CD4-positive, alpha-beta memory T cell (primary cell): ENCODE measurements at regions of chr7 and their contacts with region 1.

Region 1: DNA sequence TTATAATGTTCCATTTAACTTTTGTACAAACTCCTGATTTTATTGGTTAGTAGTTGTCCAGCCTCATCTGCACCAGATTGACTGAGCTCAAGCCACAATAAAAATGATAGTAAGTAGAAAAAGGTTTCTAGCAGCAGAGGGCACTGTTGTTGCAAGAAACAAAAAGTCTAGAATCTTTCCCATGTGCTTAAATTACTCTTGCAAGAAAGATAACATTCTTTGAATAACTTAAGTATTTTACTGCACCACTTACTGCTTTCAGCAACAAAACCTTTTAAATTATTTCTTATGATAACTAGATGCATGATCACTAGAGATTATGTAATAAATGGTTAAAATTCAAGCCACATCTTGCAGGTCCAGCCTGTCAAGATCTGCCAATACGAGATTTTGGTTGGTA is 27.0 kb downstream of the LMOD2 start:
- DNase-seq: peak; percentile 27 to 34 (median 29)
- H3K4me3 ChIP-seq: no peak overlapping the region
- H3K4me3 Mint-ChIP-seq: no peak overlapping the region
- H3K27ac ChIP-seq: no peak overlapping the region
- H3K27ac Mint-ChIP-seq: no peak overlapping the region
- H3K4me1 ChIP-seq: no peaks in the 10 kb centered on the region
- H3K4me1 Mint-ChIP-seq: peaks cover 0 to 4% (median 0%) of the 10 kb centered on the region in 4 donors
- H3K27me3 ChIP-seq: no peaks in the 10 kb centered on the region
- H3K27me3 Mint-ChIP-seq: no peaks in the 10 kb centered on the region

Region 2: DNA sequence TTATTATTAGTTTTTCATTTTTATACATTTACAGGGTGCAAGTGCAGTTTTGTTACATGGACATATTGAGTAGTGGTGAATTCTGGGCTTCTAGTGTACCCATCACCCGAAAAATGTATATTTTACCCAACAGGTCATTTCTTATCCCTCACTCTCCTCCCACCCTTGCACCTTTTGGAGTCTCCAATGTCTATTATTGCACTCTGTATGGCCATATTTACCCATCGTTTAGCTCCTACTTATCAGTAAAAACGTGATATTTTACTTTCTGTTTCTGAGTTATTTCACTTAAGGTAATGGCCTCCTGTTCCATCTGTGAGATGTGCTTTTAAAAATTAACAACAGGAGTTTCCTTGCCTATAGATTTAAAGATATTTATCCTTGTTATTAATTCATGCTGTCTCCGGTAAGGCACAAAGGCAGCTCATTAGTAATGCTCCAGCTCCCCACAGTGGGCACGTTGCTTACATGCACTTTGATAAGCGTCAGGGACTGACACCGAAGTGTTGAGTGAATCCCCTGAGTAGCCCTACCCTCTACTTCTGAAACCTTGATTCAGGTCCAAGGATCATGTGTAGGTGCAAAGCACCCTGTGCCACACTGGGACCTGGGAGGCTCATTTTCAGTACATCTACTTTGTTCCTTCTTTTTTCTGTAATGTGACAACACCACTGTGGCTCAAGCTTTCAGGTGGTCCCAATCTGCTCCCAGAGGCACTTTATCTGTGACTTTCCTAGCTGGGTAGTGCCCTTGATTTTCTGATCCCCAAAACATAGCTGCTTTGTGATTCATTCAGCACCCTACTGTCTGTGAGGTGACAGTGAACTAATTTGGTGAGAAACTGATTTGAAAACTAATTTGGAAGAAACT is 189.5 kb after region 1 on chr7:
- CTCF ChIA-PET with region 1: interaction called, 8 read pairs
- POLR2A ChIA-PET with region 1: no interaction called
- intact Hi-C with region 1: loop called (anchors 2 kb)
- DNase-seq: peak; percentile 6 to 35 (median 9)
- H3K4me3 ChIP-seq: no peak overlapping the region
- H3K4me3 Mint-ChIP-seq: no peak overlapping the region
- H3K27ac ChIP-seq: no peak overlapping the region
- H3K27ac Mint-ChIP-seq: no peak overlapping the region
- H3K4me1 ChIP-seq: no peaks in the 10 kb centered on the region
- H3K4me1 Mint-ChIP-seq: peaks cover 0 to 6% (median 3%) of the 10 kb centered on the region in 4 donors
- H3K27me3 ChIP-seq: no peaks in the 10 kb centered on the region
- H3K27me3 Mint-ChIP-seq: peaks cover 3 to 7% of the 10 kb centered on the region in 2 donors

Region 3: GRCh38 chr7:124856299-124856888 is 1173.7 kb after region 1 on chr7:
- CTCF ChIA-PET with region 1: no interaction called
- POLR2A ChIA-PET with region 1: no interaction called
- intact Hi-C with region 1: loop called (anchors 5 kb)
- DNase-seq: peak in 4 of 5 donors; percentile 7 to 21 (median 16)
- H3K4me3 ChIP-seq: no peak overlapping the region
- H3K4me3 Mint-ChIP-seq: no peak overlapping the region
- H3K27ac ChIP-seq: no peak overlapping the region
- H3K27ac Mint-ChIP-seq: no peak overlapping the region
- H3K4me1 ChIP-seq: no peaks in the 10 kb centered on the region
- H3K4me1 Mint-ChIP-seq: peaks cover 1 to 4% (median 3%) of the 10 kb centered on the region in 4 donors
- H3K27me3 ChIP-seq: no peaks in the 10 kb centered on the region
- H3K27me3 Mint-ChIP-seq: no peaks in the 10 kb centered on the region